AG04450 (cell line): ENCODE measurements at regions of chr17 and their contacts with region 1.

Region 1: DNA sequence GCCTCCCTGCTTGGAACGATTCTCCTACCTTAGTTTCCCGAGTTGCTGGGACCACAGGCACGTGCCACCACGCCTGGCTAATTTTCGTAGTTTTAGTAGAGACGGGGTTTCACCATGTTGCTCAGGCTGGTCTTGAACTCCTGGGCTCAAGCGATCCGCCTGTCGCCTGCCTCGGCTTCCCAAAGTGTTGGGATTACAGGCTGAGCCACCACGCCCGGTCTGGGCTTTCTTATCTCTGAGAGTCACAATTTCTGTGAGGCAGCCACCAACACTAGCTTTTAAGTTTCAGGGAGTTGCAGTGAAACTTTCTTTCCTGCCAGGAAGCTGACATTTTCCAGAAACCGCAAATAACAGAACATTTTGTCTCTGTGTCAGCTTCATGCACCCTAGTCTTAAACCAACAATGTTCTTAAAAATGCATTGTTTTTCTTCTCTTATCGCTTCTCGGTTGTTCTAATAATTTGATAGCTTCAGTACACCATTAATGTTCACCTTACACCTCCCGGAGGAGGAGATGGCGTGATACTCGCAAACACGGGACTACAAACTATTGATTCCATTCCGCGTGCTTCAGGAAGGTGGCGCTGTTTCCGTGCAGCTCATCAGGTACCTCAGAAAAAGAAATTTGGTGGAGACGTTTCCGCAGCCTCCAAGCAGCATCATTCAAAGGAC is 7.4 kb upstream of the DHRS7B start:
- DNase-seq: peak; percentile 18
- H3K4me3 ChIP-seq: no peak overlapping the region
- H3K27ac ChIP-seq: no peak overlapping the region
- H3K27me3 ChIP-seq: peaks cover 23% of the 10 kb centered on the region
- CTCF ChIP-seq: peak; percentile 92

Region 2: GRCh38 chr17:20999044-20999573 is 120.3 kb before region 1 on chr17:
- CTCF ChIA-PET with region 1: no interaction called
- POLR2A ChIA-PET with region 1: no interaction called
- DNase-seq: no peak
- H3K4me3 ChIP-seq: no peak overlapping the region
- H3K27ac ChIP-seq: peak overlapping the region; percentile 21
- H3K27me3 ChIP-seq: no peaks in the 10 kb centered on the region
- CTCF ChIP-seq: no peak

Region 3: GRCh38 chr17:21043286-21044232 is 75.8 kb before region 1 on chr17:
- CTCF ChIA-PET with region 1: interaction called, 10 read pairs
- POLR2A ChIA-PET with region 1: no interaction called
- DNase-seq: peak; percentile 98
- H3K4me3 ChIP-seq: peak overlapping the region; percentile 69
- H3K27ac ChIP-seq: peak overlapping the region; percentile 90
- H3K27me3 ChIP-seq: no peaks in the 10 kb centered on the region
- CTCF ChIP-seq: peak; percentile 80

Region 4: DNA sequence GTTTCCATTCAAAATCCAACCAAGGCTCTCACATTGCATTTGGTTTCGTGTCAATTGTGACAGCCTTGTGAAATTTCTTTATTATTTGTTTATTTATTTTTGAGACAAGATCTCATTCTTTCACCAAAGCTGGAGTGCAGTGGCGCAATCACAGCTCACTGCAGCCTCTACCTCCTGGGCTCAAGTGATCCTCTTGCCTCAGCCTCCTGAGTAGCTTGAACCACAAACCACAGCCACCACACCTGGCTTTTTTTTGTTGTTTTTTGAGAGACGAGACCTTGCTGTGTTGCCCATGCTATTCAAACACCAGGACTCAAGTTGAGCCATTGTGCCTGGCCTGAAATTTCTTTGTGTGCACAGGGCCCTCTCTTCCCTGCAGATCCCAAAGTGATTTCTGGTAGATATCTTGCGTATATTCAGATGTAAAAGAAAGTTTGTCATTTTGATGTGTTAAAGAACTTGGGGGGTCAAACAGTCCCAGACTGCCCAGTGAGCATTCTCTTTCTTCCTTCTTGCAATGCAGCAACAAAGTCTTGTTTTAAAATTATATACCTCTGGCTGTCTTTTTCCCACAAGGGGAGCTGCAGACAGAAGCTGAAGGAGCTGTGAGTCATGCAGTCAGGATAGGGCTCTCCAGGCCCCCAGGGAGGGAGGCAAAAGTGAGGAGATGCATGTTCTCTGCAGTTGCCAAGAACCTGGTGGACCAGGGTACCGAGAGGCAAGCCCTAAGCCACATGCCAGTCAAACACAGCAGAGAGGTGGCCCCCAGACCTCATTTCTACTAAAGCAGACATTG is 61.1 kb before region 1 on chr17:
- CTCF ChIA-PET with region 1: interaction called, 18 read pairs
- POLR2A ChIA-PET with region 1: no interaction called
- DNase-seq: no peak
- H3K4me3 ChIP-seq: no peak overlapping the region
- H3K27ac ChIP-seq: no peak overlapping the region
- H3K27me3 ChIP-seq: peaks cover 13% of the 10 kb centered on the region
- CTCF ChIP-seq: peak; percentile 40

Region 5: DNA sequence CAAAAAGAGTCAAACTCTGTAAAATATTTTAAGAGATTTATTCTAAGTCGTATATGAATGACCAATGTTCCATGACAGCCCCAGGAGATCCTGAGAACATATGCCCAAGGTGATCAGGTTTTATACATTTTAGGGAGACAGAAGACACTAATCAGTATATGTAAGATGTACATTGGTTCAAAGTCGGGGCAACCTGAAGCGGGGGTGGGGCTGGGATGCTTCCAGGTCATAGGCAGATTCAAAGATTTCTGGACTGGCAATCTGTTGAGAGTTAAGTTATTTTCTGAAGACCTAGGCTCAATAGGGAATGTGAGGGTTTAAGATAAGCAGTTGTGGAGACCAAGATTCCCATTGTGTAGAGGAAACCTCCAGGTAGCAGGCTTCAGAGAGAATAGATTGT is 13.1 kb before region 1 on chr17:
- CTCF ChIA-PET with region 1: interaction called, 33 read pairs
- POLR2A ChIA-PET with region 1: no interaction called
- DNase-seq: no peak
- H3K4me3 ChIP-seq: no peak overlapping the region
- H3K27ac ChIP-seq: no peak overlapping the region
- H3K27me3 ChIP-seq: peaks cover 8% of the 10 kb centered on the region
- CTCF ChIP-seq: no peak

Region 6: GRCh38 chr17:21149621-21150020 is 30.2 kb after region 1 on chr17:
- CTCF ChIA-PET with region 1: interaction called, 10 read pairs
- POLR2A ChIA-PET with region 1: no interaction called
- DNase-seq: no peak
- H3K4me3 ChIP-seq: no peak overlapping the region
- H3K27ac ChIP-seq: no peak overlapping the region
- H3K27me3 ChIP-seq: no peaks in the 10 kb centered on the region
- CTCF ChIP-seq: no peak

Region 7: GRCh38 chr17:21239680-21240368 is 120.4 kb after region 1 on chr17:
- CTCF ChIA-PET with region 1: interaction called, 11 read pairs
- POLR2A ChIA-PET with region 1: no interaction called
- DNase-seq: no peak
- H3K4me3 ChIP-seq: no peak overlapping the region
- H3K27ac ChIP-seq: no peak overlapping the region
- H3K27me3 ChIP-seq: peaks cover 6% of the 10 kb centered on the region
- CTCF ChIP-seq: peak; percentile 55

Region 8: DNA sequence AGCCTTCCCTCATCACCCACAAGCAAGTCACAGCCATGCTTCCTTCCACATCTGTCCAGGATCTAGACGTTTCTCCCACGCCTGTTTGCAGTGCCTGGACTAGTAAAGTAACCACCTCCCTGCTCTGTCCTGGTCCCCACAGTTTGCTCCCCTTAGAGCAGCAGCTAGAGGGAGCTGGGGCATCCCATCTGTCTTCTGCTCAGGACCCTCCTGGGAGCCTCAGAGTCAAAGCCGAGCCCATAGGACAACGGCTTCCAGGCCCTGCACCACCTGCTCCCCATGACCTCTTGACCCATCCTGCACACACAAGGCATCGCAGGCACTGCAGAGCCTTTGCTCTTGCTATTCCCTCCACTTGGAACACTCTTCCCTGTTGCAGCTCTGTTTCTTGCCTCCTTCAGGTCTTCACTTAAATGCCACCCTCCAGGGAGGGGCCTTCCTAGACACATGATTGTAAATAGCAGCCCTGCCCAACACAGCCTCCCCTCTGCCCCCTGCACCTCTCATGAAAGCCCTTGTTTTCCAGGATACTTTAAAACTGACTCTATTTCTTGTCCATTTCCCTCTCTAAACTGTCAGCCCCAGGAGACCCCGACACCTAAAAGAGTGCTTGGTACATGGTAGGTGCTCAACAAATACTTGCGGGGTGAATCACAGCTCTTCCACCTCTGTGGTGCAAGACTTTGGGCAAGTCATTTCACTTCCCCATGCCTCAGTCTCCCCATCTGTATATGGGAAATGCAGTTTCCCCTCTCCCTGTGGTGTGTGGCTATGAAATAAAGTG is 130.7 kb after region 1 on chr17:
- CTCF ChIA-PET with region 1: interaction called, 11 read pairs
- POLR2A ChIA-PET with region 1: no interaction called
- DNase-seq: no peak
- H3K4me3 ChIP-seq: no peak overlapping the region
- H3K27ac ChIP-seq: no peak overlapping the region
- H3K27me3 ChIP-seq: no peaks in the 10 kb centered on the region
- CTCF ChIP-seq: no peak